ENCODE measurements at regions of chr15 and their contacts with region 1.

Region 1: DNA sequence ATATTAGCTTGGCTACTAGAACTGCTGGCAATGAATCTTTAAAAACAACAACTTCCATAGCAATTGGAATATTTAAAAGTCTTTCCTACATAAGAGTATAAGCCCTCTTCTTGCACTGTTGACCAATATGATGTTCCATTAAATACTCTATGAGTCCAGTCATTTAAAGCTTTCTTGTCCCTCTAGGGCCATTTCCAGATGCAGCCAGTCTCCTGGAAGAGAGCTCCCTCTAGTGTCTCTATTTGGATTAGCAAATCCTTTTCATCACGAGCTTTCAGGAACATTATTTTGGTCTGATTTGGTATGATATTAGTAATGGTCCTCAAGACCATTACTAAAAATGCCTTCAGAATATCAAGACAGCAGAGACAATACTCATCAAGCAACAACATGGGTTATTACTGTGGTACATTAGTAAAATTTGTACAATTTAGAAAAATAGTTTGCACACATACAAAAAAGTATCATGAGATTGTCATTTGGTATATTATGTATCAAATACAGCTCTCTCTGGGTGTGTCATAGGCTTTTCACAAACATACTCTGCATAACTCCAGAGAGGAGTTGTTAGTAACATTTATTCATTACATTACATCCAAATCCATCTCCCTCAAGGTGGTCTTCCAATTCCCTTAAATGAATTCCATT is 101.3 kb downstream of the DPH6 start:
- DNase-seq: no peak
- ATAC-seq: peak; percentile 73
- H3K4me3 ChIP-seq: no peak overlapping the region
- H3K27ac ChIP-seq: no peak overlapping the region
- H3K4me1 ChIP-seq: peaks cover 0 to 3% of the 10 kb centered on the region in 2 donors
- H3K27me3 ChIP-seq: no peaks in the 10 kb centered on the region

Region 2: GRCh38 chr15:35078221-35078915 is 366.3 kb before region 1 on chr15:
- intact Hi-C with region 1: loop called in 1 of 2 experiments (anchors 5 kb)
- DNase-seq: no peak
- ATAC-seq: peak; percentile 76
- H3K4me3 ChIP-seq: no peak overlapping the region
- H3K27ac ChIP-seq: no peak overlapping the region
- H3K4me1 ChIP-seq: no peaks in the 10 kb centered on the region
- H3K27me3 ChIP-seq: no peaks in the 10 kb centered on the region

Region 3: GRCh38 chr15:35289024-35289617 is 155.6 kb before region 1 on chr15:
- intact Hi-C with region 1: loop called (anchors 5 kb)
- DNase-seq: no peak
- ATAC-seq: peak; percentile 65
- H3K4me3 ChIP-seq: no peak overlapping the region
- H3K27ac ChIP-seq: no peak overlapping the region
- H3K4me1 ChIP-seq: no peaks in the 10 kb centered on the region
- H3K27me3 ChIP-seq: no peaks in the 10 kb centered on the region

Region 4: GRCh38 chr15:35519541-35520149 is 75.0 kb after region 1 on chr15:
- intact Hi-C with region 1: no loop called
- DNase-seq: no peak
- ATAC-seq: peak; percentile 81
- H3K4me3 ChIP-seq: no peak overlapping the region
- H3K27ac ChIP-seq: no peak overlapping the region
- H3K4me1 ChIP-seq: no peaks in the 10 kb centered on the region
- H3K27me3 ChIP-seq: no peaks in the 10 kb centered on the region